Activated CD8-positive, alpha-beta T cell treated with anti-CD3 and anti-CD28 coated beads for 36 hours (primary cell): ENCODE measurements at regions of chr14 and their contacts with region 1.

Region 1: DNA sequence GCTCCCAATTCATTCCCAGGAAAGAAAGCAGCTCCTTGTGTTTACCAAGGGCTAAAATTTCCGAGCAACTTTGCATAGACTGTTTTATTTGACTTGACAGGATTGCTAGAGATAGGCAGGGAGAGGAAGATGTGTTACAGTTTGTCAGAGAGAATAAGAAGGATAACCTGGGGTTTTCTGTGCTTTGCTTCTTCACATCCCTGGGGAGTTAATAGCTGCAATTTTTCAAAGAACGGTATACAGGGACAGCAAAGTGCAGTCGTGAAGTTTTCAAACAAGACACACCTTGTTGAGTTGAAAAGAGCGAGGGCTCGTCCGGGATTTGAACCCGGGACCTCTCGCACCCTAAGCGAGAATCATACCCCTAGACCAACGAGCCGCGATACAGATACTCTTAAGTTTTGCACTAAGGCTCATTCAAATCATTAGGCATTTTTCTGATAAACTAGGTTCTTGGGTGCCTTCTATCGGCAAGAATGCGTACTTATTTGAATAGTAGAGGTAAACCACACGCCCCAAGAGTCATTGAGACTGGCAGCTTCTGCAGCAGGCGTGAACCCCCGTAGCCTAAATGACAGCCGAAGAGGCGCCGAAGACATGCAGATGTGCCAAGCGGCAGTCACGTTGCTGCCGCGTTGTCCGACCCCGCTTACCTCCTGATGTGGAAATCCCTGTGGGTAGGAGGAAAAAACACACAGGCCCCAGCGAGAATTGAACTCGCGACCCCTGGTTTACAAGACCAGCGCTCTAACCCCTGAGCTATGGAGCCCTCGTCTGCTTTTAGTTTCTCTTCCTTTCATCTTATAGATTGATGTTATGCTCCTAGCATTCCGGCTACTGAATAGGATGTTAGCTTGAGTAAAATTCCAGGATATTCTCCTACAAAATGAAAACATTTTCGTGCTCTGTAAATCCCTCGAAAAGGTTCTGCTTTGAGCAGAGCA is 22.2 kb upstream of the RNASE12 start:
- DNase-seq: peak; percentile 91
- ATAC-seq: peak; percentile 85
- H3K4me3 Mint-ChIP-seq: no peak overlapping the region
- H3K27ac Mint-ChIP-seq: no peak overlapping the region
- H3K4me1 Mint-ChIP-seq: peaks cover 13% of the 10 kb centered on the region
- H3K27me3 Mint-ChIP-seq: no peaks in the 10 kb centered on the region
- CTCF ChIP-seq: peak; percentile 45

Region 2: DNA sequence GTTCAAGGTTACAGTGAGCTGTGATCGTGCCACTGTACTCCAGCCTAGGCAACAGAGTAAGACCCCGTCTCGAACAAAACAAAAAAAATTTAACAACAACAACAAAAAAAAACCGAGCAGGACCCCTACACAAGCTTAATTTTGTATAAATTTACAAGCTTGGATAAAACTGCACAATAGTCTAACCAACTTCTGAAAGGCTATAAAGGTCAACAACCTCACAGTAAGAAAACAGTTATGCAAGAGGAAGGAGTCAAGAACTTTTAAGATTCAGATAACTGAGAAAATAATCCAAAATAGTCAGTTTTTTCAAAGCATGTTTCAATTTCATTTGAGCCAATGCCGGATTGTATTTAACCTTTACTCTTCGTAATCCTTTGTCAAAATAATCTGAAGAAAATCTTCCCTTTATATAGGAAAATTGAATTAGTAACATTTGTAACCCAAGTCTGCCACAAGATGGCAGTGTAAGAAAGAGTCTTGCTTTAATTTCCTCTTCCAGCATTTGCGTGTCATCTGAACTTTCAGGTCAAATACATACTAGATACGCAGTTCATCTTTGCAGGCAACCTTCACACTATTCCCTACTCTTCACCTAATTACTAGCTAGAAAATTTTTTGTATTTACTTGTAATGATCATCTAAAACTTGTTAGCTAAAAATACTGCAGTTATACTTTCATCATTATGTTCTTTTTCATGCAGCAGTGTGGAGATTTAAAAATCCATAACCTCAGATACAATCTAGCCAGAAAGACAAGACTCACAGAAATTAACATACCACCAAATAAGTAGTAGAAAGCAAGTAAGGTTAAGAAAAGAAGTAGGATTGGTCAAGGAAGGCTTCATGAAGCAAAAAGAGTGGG is 286.1 kb before region 1 on chr14:
- CTCF ChIA-PET with region 1: interaction called, 104 read pairs
- POLR2A ChIA-PET with region 1: no interaction called
- intact Hi-C with region 1: no loop called
- DNase-seq: peak; percentile 13
- ATAC-seq: peak; percentile 53
- H3K4me3 Mint-ChIP-seq: peak overlapping the region; percentile 0
- H3K27ac Mint-ChIP-seq: peak overlapping the region; percentile 41
- H3K4me1 Mint-ChIP-seq: peaks cover 36% of the 10 kb centered on the region
- H3K27me3 Mint-ChIP-seq: no peaks in the 10 kb centered on the region
- CTCF ChIP-seq: peak; percentile 87

Region 3: GRCh38 chr14:20413045-20413799 is 200.1 kb before region 1 on chr14 and contains the start of gene TEP1:
- CTCF ChIA-PET with region 1: interaction called, 12 read pairs
- POLR2A ChIA-PET with region 1: interaction called, 4 read pairs
- intact Hi-C with region 1: loop called (anchors 5 kb)
- DNase-seq: peak; percentile 85
- ATAC-seq: peak; percentile 82
- H3K4me3 Mint-ChIP-seq: peak within 1 kb of the TSS; percentile 92
- H3K27ac Mint-ChIP-seq: peak within 1 kb of the TSS; percentile 97
- H3K4me1 Mint-ChIP-seq: peaks cover 45% of the 10 kb centered on the region
- H3K27me3 Mint-ChIP-seq: no peaks in the 10 kb centered on the region
- CTCF ChIP-seq: no peak
- total RNA-seq, gene TEP1: 22.8 to 25.3 TPM

Region 4: DNA sequence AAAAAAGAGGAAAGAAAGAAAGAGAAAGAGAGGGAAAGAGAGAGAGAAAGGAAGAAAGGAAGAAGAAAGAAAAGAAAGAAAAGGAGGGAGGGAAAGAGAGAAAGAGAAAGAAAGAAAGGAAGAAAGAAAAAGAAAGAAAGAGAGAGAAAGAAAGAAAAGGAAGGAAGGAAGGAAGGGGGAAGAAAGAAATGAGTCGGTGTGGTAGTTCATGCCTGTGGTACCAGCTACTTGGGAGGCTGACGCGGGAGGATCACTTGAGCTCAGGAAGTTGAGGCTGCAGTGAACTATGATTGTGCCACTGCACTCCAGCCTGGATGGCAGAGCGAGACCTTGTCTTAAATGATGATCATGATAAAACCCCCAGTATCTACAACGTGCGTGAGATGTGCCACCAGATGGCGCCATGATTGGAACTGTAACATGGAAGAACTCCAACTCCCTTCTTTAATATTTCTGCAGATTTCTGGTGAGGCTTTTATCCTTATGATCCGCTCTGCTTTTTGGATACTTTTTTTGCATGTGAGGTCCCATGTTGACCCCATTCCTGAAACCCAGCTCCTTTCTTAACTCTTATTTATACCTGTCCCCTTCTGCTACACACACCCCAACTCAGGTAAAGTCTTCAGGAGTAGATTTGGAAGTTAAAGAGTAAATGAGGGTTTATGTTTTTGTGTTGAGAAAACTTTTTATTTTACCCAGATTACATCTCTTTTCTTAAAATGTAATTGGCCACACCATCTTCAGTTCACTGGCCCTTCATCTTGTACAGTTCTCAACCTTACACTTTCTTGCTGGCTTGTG is 82.4 kb before region 1 on chr14:
- CTCF ChIA-PET with region 1: interaction called, 27 read pairs
- POLR2A ChIA-PET with region 1: no interaction called
- intact Hi-C with region 1: loop called (anchors 1 kb)
- DNase-seq: peak; percentile 90
- ATAC-seq: peak; percentile 88
- H3K4me3 Mint-ChIP-seq: peak overlapping the region; percentile 40
- H3K27ac Mint-ChIP-seq: no peak overlapping the region
- H3K4me1 Mint-ChIP-seq: peaks cover 7% of the 10 kb centered on the region
- H3K27me3 Mint-ChIP-seq: peaks cover 2% of the 10 kb centered on the region
- CTCF ChIP-seq: peak; percentile 80

Region 5: GRCh38 chr14:20632682-20633428 is 19.5 kb after region 1 on chr14:
- CTCF ChIA-PET with region 1: interaction called, 21 read pairs
- POLR2A ChIA-PET with region 1: interaction called, 15 read pairs
- intact Hi-C with region 1: loop called (anchors 1 kb)
- DNase-seq: peak; percentile 92
- ATAC-seq: peak; percentile 87
- H3K4me3 Mint-ChIP-seq: peak overlapping the region; percentile 80
- H3K27ac Mint-ChIP-seq: peak overlapping the region; percentile 76
- H3K4me1 Mint-ChIP-seq: peaks cover 35% of the 10 kb centered on the region
- H3K27me3 Mint-ChIP-seq: peaks cover 31% of the 10 kb centered on the region
- CTCF ChIP-seq: no peak

Region 6: DNA sequence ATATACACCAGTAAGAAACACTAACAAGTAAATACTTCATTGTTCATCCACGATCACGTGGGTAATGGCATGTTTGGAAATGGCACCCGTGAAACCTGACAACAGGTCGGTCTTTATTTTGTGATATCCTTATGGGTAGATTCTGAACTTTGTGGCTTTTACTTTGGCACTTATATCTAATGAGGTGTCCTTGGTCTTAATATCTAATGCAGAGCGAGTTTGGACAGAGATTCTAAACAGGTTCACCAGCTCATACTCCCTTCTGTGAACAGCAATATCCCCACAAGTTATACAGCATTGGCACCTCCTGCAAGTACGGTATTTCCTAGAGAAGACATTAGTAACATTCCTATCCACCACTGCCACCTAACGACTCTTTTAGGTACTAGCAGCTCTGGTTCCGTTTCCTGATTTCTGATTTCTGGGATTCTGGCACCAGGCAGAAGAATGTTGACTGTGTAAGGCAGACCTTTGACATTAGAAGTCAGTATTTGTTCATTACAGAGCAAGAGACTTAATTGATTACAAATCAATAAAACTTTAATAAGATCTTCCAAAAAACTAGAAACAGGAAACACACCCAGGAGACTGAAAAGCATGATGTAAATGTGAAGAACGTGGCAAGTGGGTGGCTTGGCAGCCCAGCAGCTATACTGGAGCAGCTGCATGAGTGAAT is 77.6 kb after region 1 on chr14:
- CTCF ChIA-PET with region 1: interaction called, 30 read pairs
- POLR2A ChIA-PET with region 1: no interaction called
- intact Hi-C with region 1: no loop called
- DNase-seq: peak; percentile 47
- ATAC-seq: peak; percentile 90
- H3K4me3 Mint-ChIP-seq: no peak overlapping the region
- H3K27ac Mint-ChIP-seq: no peak overlapping the region
- H3K4me1 Mint-ChIP-seq: peaks cover 9% of the 10 kb centered on the region
- H3K27me3 Mint-ChIP-seq: peaks cover 4% of the 10 kb centered on the region
- CTCF ChIP-seq: peak; percentile 97